HepG2 (cell line): ENCODE measurements at regions of chr5 and their contacts with region 1.

Region 1: DNA sequence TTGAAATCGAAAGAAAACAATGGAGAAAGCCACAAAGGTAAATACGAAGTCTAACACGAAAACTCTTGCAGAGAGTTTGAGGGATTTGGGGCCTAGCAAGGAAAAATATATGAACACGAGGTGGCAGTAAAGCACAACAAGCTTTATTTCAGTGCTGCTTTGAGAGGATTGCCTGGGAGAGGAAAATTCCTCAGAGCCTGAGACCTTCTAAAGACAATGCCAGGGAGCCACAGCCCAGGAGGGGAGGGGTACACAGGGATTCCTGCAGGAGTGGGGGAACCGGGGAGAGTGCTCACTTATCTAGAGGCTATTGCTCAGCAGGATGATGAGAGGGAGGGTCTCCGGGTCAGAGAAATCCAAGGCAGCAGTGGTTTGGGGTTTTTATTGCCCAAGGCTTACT is 134.9 kb upstream of the ADCY2 start:
- DNase-seq: peak; percentile 42
- ATAC-seq: peak; percentile 76
- H3K4me3 ChIP-seq: no peak overlapping the region
- H3K27ac ChIP-seq: no peak overlapping the region
- H3K4me1 ChIP-seq: no peaks in the 10 kb centered on the region
- H3K27me3 ChIP-seq: no peaks in the 10 kb centered on the region
- CTCF ChIP-seq: peak; percentile 71
- EP300 ChIP-seq: no peak
- POLR2A ChIP-seq: no peak
- RAD21 ChIP-seq: peak; percentile 64

Region 2: DNA sequence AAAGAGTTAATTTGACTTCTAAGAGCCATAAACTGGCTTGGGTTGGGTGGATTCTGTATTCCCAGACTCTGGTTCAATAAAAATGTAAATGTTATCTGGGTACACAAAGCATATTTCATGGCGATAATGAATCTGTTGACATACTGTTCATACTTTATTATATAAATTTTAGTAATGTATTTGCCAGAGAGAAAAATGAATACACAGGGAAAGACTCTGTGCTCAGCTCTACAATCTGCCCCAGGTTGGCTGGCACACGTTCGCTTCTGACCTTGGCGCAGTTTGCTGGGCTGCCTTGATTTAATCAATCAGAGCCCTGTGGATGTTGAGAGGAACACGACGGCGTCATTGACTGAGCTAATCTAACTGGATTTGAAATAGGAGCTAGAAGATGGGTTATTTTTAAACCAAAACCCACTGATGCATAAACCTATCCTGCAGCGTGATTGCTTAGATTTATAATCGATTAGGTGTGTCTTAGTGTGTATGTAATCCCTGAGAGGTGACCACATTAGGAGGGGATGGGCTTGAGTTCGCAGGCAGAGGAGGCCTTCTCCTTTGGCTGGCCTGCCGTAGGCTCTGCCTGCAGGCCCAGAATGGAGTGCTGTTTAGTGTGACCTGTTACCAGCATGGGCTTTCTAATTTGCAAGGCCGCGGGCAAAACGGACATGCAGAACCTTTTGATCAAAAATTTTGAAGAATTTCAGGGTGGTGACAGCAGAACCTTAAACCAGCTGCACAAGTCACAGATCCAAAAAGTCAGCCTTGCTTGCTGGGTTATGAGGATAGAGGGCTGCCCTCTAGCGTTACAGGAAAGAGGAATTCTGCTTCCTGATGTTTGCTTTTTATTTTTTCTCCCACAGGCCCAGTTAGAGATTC is 131.0 kb after region 1 on chr5:
- CTCF ChIA-PET with region 1: no interaction called
- POLR2A ChIA-PET with region 1: no interaction called
- in situ Hi-C with region 1: no loop called
- intact Hi-C with region 1: loop called (anchors 2 kb)
- DNase-seq: peak; percentile 6
- ATAC-seq: peak; percentile 54
- H3K4me3 ChIP-seq: no peak overlapping the region
- H3K27ac ChIP-seq: no peak overlapping the region
- H3K4me1 ChIP-seq: no peaks in the 10 kb centered on the region
- H3K27me3 ChIP-seq: peaks cover 0 to 16% of the 10 kb centered on the region in 2 experiments; a peak in 3 of 5 replicates
- CTCF ChIP-seq: peak; percentile 52
- EP300 ChIP-seq: no peak
- POLR2A ChIP-seq: no peak
- RAD21 ChIP-seq: no peak

Region 3: GRCh38 chr5:7592910-7593309 is 331.9 kb after region 1 on chr5:
- CTCF ChIA-PET with region 1: interaction called, 8 read pairs
- POLR2A ChIA-PET with region 1: no interaction called
- in situ Hi-C with region 1: no loop called
- intact Hi-C with region 1: loop called (anchors 1 kb)
- DNase-seq: no peak
- ATAC-seq: no peak; the same call in 2 of the 3 replicates
- H3K4me3 ChIP-seq: no peak overlapping the region
- H3K27ac ChIP-seq: no peak overlapping the region
- H3K4me1 ChIP-seq: no peaks in the 10 kb centered on the region
- H3K27me3 ChIP-seq: no peaks in the 10 kb centered on the region
- CTCF ChIP-seq: peak; percentile 35
- EP300 ChIP-seq: no peak
- POLR2A ChIP-seq: no peak
- RAD21 ChIP-seq: no peak

Region 4: GRCh38 chr5:7745882-7746610 is 485.0 kb after region 1 on chr5:
- CTCF ChIA-PET with region 1: interaction called, 14 read pairs
- POLR2A ChIA-PET with region 1: no interaction called
- in situ Hi-C with region 1: loop called (anchors 25 kb)
- intact Hi-C with region 1: no loop called
- DNase-seq: peak; percentile 41
- ATAC-seq: peak; percentile 82
- H3K4me3 ChIP-seq: no peak overlapping the region
- H3K27ac ChIP-seq: no peak overlapping the region
- H3K4me1 ChIP-seq: no peaks in the 10 kb centered on the region
- H3K27me3 ChIP-seq: peaks cover 0 to 14% of the 10 kb centered on the region in 2 experiments; a peak in 1 of 5 replicates
- CTCF ChIP-seq: peak; percentile 70
- EP300 ChIP-seq: no peak
- POLR2A ChIP-seq: no peak
- RAD21 ChIP-seq: no peak

Region 5: DNA sequence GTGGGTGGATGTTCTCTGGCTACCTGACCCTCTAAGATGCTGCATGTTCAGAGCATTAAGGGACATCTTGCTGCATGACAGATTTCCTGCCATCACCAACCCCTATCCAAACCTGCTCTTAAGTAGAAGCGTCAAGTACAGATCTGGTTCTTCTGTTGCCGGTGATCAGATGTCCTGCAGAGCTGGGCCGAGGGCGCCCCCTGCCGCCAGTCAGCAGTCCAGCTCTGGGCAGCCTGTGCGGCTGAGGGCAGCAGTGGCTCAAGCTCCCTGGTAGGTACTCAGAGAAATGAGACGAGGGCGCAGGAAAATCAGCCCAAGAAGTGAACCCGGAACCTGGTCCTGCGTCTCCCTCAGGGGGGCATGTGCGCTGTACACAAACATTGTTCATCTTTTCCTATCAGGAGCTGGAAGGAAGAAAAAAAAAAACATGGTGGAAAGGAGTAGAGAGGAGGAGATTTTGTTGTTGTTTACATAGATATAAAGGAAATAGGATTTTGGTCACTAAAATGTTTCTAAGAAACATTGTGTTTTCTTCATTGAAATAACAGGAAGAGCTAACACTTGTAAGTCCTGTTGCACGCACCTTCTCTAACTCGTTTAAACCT is 494.0 kb after region 1 on chr5:
- CTCF ChIA-PET with region 1: interaction called, 16 read pairs
- POLR2A ChIA-PET with region 1: no interaction called
- in situ Hi-C with region 1: loop called (anchors 25 kb)
- intact Hi-C with region 1: loop called (anchors 2 kb)
- DNase-seq: peak; percentile 11
- ATAC-seq: peak; percentile 100
- H3K4me3 ChIP-seq: no peak overlapping the region
- H3K27ac ChIP-seq: no peak overlapping the region
- H3K4me1 ChIP-seq: no peaks in the 10 kb centered on the region
- H3K27me3 ChIP-seq: peaks cover 4 to 24% of the 10 kb centered on the region in 2 experiments; a peak in 3 of 5 replicates
- CTCF ChIP-seq: peak; percentile 89
- EP300 ChIP-seq: no peak
- POLR2A ChIP-seq: no peak
- RAD21 ChIP-seq: peak; percentile 50

Region 6: DNA sequence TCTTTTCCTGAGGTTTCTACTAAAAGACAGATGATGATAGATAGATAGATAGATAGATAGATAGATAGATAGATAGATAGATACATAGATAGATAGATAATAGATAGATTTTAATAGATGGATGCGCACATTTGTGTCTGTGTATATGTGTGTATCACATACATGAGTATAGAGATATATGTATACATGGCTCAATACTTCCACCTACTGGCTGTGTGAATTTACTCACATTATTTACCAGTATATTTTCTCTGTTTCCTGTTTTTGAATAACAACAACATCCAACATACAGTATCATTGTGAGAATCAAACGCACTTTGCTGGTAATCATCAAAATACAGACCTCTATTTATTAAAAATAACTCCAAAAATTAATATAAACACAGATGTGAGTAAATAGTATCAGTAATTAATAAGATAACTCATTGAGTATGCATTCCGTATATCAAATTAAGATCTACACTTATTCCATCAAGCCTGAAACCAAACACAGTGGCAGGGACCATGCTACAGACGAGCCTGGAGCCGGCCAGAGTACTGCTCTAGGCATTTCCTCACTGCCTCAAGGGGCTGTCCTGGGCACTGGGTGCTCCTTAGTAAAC is 1946.9 kb after region 1 on chr5:
- CTCF ChIA-PET with region 1: no interaction called
- POLR2A ChIA-PET with region 1: no interaction called
- in situ Hi-C with region 1: no loop called
- intact Hi-C with region 1: loop called (anchors 5 kb)
- DNase-seq: peak; percentile 34
- ATAC-seq: peak; percentile 72; the same call in 2 of the 3 replicates
- H3K4me3 ChIP-seq: no peak overlapping the region
- H3K27ac ChIP-seq: no peak overlapping the region
- H3K4me1 ChIP-seq: no peaks in the 10 kb centered on the region
- H3K27me3 ChIP-seq: no peaks in the 10 kb centered on the region
- CTCF ChIP-seq: peak; percentile 60
- EP300 ChIP-seq: no peak
- POLR2A ChIP-seq: no peak
- RAD21 ChIP-seq: no peak